Aorta (tissue), 5 donors: ENCODE measurements at regions of chr19 and their contacts with region 1.

Region 1: GRCh38 chr19:6279931-6280591 is at the start of gene MLLT1:
- DNase-seq: peak; percentile 98 to 100
- ATAC-seq: peak; percentile 96
- H3K4me3 ChIP-seq: peak within 1 kb of the TSS; percentile 96 to 99
- H3K27ac ChIP-seq: no peak within 1 kb of the TSS
- H3K4me1 ChIP-seq: no peaks in the 10 kb centered on the region
- H3K27me3 ChIP-seq: no peaks in the 10 kb centered on the region
- total RNA-seq, gene MLLT1: 54.8 to 55.5 TPM

Region 2: GRCh38 chr19:6056801-6057650 is 223.0 kb before region 1 on chr19:
- intact Hi-C with region 1: loop called in 1 of 2 experiments (anchors 10 kb)
- DNase-seq: peak; percentile 90 to 92
- ATAC-seq: peak; percentile 88
- H3K4me3 ChIP-seq: no peak overlapping the region
- H3K27ac ChIP-seq: peak overlapping the region; percentile 76 to 88
- H3K4me1 ChIP-seq: peaks cover 3 to 5% of the 10 kb centered on the region in 2 donors
- H3K27me3 ChIP-seq: no peaks in the 10 kb centered on the region

Region 3: GRCh38 chr19:6110360-6110977 is 169.6 kb before region 1 on chr19 and contains the start of gene RFX2:
- intact Hi-C with region 1: loop called in 1 of 2 experiments (anchors 10 kb)
- DNase-seq: peak; percentile 99
- ATAC-seq: peak; percentile 97
- H3K4me3 ChIP-seq: peak within 1 kb of the TSS; percentile 6 to 79
- H3K27ac ChIP-seq: peak within 1 kb of the TSS; percentile 95 to 99
- H3K4me1 ChIP-seq: no peaks in the 10 kb centered on the region
- H3K27me3 ChIP-seq: no peaks in the 10 kb centered on the region
- total RNA-seq, gene RFX2: 16.6 to 26.1 TPM

Region 4: GRCh38 chr19:6218491-6219162 is 61.4 kb before region 1 on chr19:
- intact Hi-C with region 1: loop called in 1 of 2 experiments (anchors 5 kb)
- DNase-seq: peak; percentile 91 to 96
- ATAC-seq: peak; percentile 85
- H3K4me3 ChIP-seq: no peak overlapping the region
- H3K27ac ChIP-seq: no peak overlapping the region
- H3K4me1 ChIP-seq: no peaks in the 10 kb centered on the region
- H3K27me3 ChIP-seq: no peaks in the 10 kb centered on the region

Region 5: GRCh38 chr19:6238643-6239281 is 41.3 kb before region 1 on chr19:
- intact Hi-C with region 1: loop called in 1 of 2 experiments (anchors 5 kb)
- DNase-seq: peak; percentile 78 to 83
- ATAC-seq: peak; percentile 59
- H3K4me3 ChIP-seq: no peak overlapping the region
- H3K27ac ChIP-seq: peak overlapping the region; percentile 6 to 78
- H3K4me1 ChIP-seq: peaks cover 2 to 3% of the 10 kb centered on the region in 2 donors
- H3K27me3 ChIP-seq: no peaks in the 10 kb centered on the region

Region 6: DNA sequence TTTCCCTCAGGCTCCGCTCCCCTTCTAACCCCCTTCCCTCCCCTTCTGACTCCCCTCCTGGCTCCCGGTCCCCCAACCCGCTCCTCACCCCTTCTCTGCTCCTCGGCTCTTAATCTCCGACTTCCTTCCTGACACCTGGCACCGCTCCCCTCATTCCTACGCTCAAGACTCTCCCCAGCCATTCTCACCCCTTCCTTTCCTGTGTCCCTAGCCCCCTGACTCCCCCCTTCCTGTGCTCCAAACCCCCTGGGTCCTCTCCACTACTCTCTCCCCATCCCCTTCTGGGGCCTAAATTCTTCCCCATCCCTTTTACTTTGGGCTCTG is 81.9 kb after region 1 on chr19:
- intact Hi-C with region 1: loop called in 1 of 2 experiments (anchors 10 kb)
- DNase-seq: no peak
- ATAC-seq: peak; percentile 41
- H3K4me3 ChIP-seq: peak overlapping the region; percentile 52 to 98
- H3K27ac ChIP-seq: peak overlapping the region in 1 of 2 donors; percentile 75
- H3K4me1 ChIP-seq: no peaks in the 10 kb centered on the region
- H3K27me3 ChIP-seq: no peaks in the 10 kb centered on the region

Region 7: DNA sequence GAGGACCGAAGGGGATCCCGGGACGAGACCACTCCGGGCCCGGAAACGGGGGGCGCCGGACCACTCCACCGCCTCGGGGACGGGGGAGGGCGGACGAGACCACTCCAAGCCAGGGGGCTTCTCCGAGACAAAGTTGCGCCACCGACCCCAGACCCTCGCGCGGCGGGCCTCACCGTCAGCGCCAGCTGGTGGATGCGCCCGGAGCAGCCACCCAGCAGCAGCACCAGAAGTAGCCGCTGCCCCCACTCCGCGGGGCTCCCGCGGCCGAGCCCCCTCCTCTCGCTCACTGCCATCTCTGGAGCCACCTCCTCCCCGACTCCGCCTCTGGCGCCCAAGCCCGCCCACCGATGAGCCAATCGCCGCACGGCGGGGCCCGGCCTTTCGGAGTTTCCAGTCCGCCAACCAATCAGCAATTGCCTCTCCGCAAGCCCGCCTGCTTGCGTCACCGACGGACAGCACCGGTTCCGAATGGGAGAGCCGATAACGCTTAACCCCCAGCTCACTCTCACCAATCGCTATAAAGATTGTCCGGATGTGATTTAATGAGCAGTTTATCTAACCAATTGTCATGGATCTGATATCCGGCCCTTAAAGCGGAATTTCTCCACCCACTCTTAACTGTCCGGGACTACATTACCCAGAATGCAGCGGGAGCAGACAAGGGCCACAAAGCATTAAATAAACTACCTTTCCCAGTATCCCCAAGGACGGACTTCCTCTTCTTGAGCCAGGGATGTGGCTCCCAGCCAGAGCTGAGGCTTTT is 457.4 kb after region 1 on chr19 and contains the start of gene GPR108:
- intact Hi-C with region 1: loop called in 1 of 2 experiments (anchors 10 kb)
- DNase-seq: peak; percentile 100
- ATAC-seq: peak; percentile 92
- H3K4me3 ChIP-seq: peak within 1 kb of the TSS; percentile 59 to 62
- H3K27ac ChIP-seq: peak within 1 kb of the TSS; percentile 47 to 92
- H3K4me1 ChIP-seq: no peaks in the 10 kb centered on the region
- H3K27me3 ChIP-seq: no peaks in the 10 kb centered on the region
- total RNA-seq, gene GPR108: 49.2 to 70.2 TPM